GM13976 (cell line): ENCODE measurements at regions of chr17 and their contacts with region 1.

Region 1: GRCh38 chr17:77319211-77320043 is 178.7 kb downstream of the SEC14L1 start:
- DNase-seq: peak; percentile 84
- CTCF ChIP-seq: no peak

Region 2: GRCh38 chr17:77208217-77208808 is 111.1 kb before region 1 on chr17:
- in situ Hi-C with region 1: no loop called
- DNase-seq: no peak
- CTCF ChIP-seq: no peak

Region 3: GRCh38 chr17:77235370-77235941 is 84.0 kb before region 1 on chr17:
- in situ Hi-C with region 1: no loop called
- DNase-seq: no peak
- CTCF ChIP-seq: no peak

Region 4: DNA sequence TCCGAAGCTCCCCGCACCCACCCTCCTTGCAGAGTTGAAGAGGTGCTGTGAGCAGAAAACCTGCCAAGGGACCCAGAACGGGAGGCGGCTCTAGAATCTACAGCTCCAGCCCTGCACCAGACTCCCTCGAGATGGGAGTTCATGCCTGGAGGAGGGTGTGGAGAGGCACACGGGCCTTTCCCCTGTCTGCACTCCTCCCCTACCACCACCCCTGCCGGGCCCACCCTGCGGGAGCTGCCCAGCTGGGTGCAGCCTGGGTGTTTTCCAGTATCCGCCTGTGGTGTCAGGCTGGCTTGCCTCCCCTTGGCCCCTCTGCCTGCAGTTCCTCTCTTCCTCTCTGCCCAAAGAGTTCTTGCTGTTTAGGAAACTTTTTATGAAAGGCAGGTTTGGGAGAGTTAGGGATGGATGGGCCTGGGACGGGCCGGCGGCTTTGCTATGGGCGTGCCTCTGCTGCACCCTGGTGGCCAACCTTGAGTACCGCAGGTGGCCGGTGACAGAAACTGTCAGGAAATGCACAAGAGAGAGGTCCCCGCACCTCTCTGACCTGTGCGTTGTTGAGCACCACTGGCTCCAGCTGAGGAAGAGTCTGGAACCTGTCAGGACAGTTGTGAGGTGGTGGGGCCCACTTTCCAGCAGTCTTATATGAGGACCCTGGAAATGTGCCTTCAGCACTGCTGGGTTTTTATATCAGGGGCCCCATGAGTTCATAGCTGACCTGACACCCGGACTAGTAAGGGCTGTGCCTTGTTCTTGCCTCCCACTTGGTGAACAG is 175.4 kb after region 1 on chr17:
- in situ Hi-C with region 1: loop called (anchors 10 kb)
- DNase-seq: peak; percentile 88
- CTCF ChIP-seq: peak; percentile 73